ENCODE measurements at regions of chr19 and their contacts with region 1.

Region 1: DNA sequence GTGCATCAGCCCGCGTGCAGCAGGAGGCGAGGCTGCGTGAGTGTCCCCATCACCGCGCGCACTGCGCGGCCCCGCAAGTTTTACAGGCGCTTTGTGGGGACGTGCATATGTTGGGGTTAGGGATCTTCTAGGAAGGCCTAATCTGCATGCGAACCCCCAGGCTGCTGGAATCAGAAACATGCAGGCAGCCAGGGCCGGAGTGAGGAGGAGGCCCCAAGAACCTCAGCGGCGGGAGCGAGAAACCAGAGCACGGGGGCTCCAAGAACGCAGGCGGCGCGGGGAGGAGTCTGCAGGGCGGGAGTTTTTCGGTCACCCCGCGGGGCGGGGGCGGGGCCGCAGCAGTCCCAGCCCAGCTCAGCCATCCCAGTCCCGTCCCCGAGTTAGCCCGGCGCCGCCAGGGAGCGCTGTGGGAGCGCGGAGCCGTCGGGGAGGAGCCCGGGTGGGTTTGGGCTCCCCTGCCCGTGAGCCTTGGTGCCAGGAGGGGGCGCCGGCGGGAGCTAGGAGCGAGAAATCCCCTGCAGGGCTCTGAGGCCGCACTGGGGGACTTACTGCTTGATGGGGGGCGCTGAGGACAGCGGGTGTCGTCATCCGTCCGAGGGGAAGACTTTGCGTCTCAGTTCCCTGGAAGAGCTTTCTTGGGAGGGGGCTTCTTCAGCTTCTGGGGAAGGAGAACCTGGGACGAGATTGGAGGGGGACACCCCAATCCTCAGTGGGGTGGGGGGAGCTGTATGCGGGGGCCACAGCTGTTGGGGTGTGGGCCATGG is 933 bp upstream of the NRTN start:
- DNase-seq: peak; percentile 94

Region 2: GRCh38 chr19:5891938-5892771 is 88.2 kb after region 1 on chr19:
- intact Hi-C with region 1: loop called (anchors 2 to 5 kb)
- DNase-seq: no peak

Region 3: DNA sequence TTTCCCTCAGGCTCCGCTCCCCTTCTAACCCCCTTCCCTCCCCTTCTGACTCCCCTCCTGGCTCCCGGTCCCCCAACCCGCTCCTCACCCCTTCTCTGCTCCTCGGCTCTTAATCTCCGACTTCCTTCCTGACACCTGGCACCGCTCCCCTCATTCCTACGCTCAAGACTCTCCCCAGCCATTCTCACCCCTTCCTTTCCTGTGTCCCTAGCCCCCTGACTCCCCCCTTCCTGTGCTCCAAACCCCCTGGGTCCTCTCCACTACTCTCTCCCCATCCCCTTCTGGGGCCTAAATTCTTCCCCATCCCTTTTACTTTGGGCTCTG is 558.1 kb after region 1 on chr19:
- intact Hi-C with region 1: no loop called
- DNase-seq: no peak